Naive thymus-derived CD8-positive, alpha-beta T cell (primary cell): ENCODE measurements at regions of chr6 and their contacts with region 1.

Region 1: GRCh38 chr6:125779924-125780539 is 10.7 kb upstream of the NCOA7 start:
- DNase-seq: peak; percentile 71 to 98 (median 88)
- ATAC-seq: peak; percentile 77 to 79
- H3K4me3 Mint-ChIP-seq: no peak overlapping the region
- H3K27ac Mint-ChIP-seq: no peak overlapping the region
- H3K4me1 Mint-ChIP-seq: peaks cover 6 to 16% (median 13%) of the 10 kb centered on the region in 4 donors
- H3K27me3 Mint-ChIP-seq: peaks cover 0 to 4% (median 0%) of the 10 kb centered on the region in 5 donors

Region 2: DNA sequence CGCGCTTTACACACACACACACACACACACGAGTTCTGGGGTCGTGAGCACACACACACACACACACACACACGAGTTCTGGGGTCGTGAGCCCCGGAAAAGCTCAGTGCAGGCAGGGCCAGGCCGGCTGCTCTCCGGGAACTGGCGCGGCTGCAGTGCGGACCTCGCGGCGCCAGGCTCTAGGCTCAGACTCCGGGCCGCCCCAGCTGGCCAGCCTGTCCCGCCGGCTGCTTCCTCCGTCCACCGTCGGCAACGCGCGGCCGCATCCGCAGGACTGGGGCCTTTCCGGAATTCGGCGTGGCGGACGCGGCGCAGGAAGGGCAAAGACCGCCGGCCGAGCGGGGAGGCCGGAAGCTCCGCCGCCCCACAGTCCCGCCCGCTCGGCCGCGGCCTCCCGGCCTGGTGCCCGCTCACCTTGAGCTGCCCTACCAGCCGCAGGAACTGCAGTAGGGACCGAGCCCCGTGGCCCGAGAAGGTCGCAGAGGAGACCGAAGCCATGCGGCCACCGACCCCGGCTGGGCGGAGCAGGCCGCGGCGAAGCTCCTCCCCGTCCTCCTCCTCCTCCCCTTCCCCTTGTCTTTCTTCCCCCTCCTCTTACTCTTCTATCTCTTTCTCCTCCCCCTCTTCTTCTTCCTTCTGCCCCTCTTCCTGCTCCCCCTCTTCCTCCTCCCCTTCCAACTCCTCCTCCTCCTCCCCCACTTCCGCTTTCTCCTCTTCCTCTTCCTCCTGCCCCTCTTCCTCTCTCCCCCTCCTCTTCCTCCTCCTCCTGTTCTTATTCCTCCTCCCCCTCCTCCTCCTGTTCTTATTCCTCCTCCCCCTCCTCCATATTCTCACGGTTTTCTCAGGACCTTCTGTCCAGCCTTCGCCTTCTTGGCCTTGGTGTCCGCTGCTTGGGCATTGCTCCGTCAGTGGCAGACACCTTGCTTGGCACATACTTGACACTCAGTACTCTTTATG is 478.3 kb before region 1 on chr6 and contains the start of gene HDDC2:
- POLR2A ChIA-PET with region 1: interaction called, 24 read pairs
- DNase-seq: peak; percentile 10 to 77 (median 33)
- ATAC-seq: peak; percentile 42 to 57
- H3K4me3 Mint-ChIP-seq: peak within 1 kb of the TSS; percentile 85 to 96 (median 92)
- H3K27ac Mint-ChIP-seq: peak within 1 kb of the TSS; percentile 89 to 98 (median 93)
- H3K4me1 Mint-ChIP-seq: peaks cover 46 to 60% (median 56%) of the 10 kb centered on the region in 4 donors
- H3K27me3 Mint-ChIP-seq: peaks cover 0 to 10% (median 4%) of the 10 kb centered on the region in 5 donors
- polyA plus RNA-seq, gene HDDC2: 118 to 134 (median 119) TPM

Region 3: GRCh38 chr6:125956506-125957390 is 176.7 kb after region 1 on chr6 and contains the start of gene HINT3:
- POLR2A ChIA-PET with region 1: interaction called, 48 read pairs
- DNase-seq: peak; percentile 95 to 98 (median 98)
- ATAC-seq: peak; percentile 87
- H3K4me3 Mint-ChIP-seq: peak within 1 kb of the TSS in 1 of 10 donors; percentile 55
- H3K27ac Mint-ChIP-seq: peak within 1 kb of the TSS in 2 of 10 donors; percentile 83 to 95
- H3K4me1 Mint-ChIP-seq: peaks cover 4 to 26% (median 10%) of the 10 kb centered on the region in 4 donors
- H3K27me3 Mint-ChIP-seq: peaks cover 4 to 10% (median 5%) of the 10 kb centered on the region in 5 donors
- polyA plus RNA-seq, gene HINT3: 7.9 to 10.4 (median 8.5) TPM

Region 4: GRCh38 chr6:125986300-125987025 is 206.4 kb after region 1 on chr6 and contains the start of gene TRMT11:
- POLR2A ChIA-PET with region 1: interaction called, 25 read pairs
- DNase-seq: peak; percentile 66 to 91 (median 78)
- ATAC-seq: peak; percentile 93 to 98
- H3K4me3 Mint-ChIP-seq: peak within 1 kb of the TSS in 6 of 10 donors; percentile 4 to 54 (median 36)
- H3K27ac Mint-ChIP-seq: peak within 1 kb of the TSS in 3 of 10 donors; percentile 13 to 26 (median 17)
- H3K4me1 Mint-ChIP-seq: peaks cover 2 to 18% (median 11%) of the 10 kb centered on the region in 4 donors
- H3K27me3 Mint-ChIP-seq: no peaks in the 10 kb centered on the region
- polyA plus RNA-seq, gene TRMT11: 9.4 to 16.1 (median 9.9) TPM